PC-3 (cell line): ENCODE measurements at regions of chr5 and their contacts with region 1.

Region 1: GRCh38 chr5:107673368-107674136 is 2.8 kb upstream of the EFNA5 start:
- DNase-seq: peak; percentile 98
- ATAC-seq: peak; percentile 45
- H3K4me3 ChIP-seq: peak overlapping the region; percentile 83
- H3K27ac ChIP-seq: peak overlapping the region; percentile 69
- H3K4me1 ChIP-seq: peaks cover 24% of the 10 kb centered on the region
- H3K27me3 ChIP-seq: peaks cover 12% of the 10 kb centered on the region; the same call in 1 of the 2 replicates
- CTCF ChIP-seq: peak; percentile 99

Region 2: DNA sequence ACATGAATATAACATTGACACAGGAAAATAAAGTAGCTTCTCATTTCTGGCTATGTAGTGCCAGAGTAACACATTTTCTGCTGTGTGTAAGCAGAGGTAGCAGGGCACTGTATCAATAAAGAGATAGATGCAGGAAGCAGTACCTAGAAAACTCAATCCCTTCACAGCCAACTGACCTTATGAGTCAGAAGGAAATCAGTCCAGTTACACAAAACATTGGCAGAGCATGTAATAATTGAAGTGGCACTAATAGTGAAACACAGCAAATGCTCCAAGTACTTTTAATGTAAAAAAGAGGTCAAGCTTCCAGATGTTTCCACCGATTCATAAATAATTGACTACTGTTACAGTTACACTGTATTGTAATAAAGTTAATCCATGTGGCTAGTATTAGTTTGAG is 709.4 kb before region 1 on chr5:
- CTCF ChIA-PET with region 1: no interaction called
- POLR2A ChIA-PET with region 1: no interaction called
- intact Hi-C with region 1: loop called (anchors 10 kb)
- DNase-seq: peak; percentile 82
- ATAC-seq: peak; percentile 90
- H3K4me3 ChIP-seq: no peak overlapping the region
- H3K27ac ChIP-seq: no peak overlapping the region
- H3K4me1 ChIP-seq: peaks cover 44% of the 10 kb centered on the region
- H3K27me3 ChIP-seq: no peaks in the 10 kb centered on the region
- CTCF ChIP-seq: no peak

Region 3: GRCh38 chr5:107257885-107258520 is 415.5 kb before region 1 on chr5:
- CTCF ChIA-PET with region 1: no interaction called
- POLR2A ChIA-PET with region 1: no interaction called
- intact Hi-C with region 1: loop called (anchors 5 kb)
- DNase-seq: peak; percentile 83
- ATAC-seq: peak; percentile 96
- H3K4me3 ChIP-seq: peak overlapping the region; percentile 30; the same call in 1 of the 2 replicates
- H3K27ac ChIP-seq: peak overlapping the region; percentile 91
- H3K4me1 ChIP-seq: peaks cover 15% of the 10 kb centered on the region
- H3K27me3 ChIP-seq: no peaks in the 10 kb centered on the region
- CTCF ChIP-seq: peak; percentile 25; the same call in 1 of the 2 replicates

Region 4: DNA sequence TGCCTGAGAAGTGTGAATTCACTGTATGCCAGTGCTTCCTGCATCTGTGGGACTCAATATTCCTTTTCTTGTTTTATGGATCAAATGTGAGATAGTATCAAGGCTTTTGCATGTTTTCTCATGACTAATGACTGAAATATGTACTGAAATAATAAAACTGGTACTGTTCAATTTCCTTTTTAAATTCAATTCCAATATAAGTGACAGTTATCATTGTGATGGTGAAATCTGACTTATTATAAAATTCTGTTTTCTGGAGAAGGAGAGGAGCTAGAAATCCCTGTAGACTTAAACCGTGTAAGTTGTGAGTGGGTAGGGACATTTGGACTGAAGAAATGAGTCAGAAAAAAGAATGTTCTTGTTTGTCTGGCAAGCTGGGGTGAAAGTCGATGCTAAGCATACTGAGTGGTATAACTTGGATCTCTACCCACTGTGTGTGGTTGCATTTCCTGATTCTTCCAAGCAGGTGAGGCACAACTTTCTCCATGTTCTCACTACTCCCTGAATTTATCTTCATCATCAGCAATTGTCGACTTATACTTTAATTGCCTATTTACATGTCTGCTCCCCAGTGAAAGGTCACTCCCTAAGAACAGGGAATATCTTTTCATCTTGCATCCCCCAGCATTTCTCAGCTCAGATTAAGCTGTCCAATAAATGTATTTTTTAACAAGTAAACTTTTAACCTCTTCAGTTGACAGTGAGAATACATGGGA is 247.9 kb before region 1 on chr5:
- CTCF ChIA-PET with region 1: no interaction called
- POLR2A ChIA-PET with region 1: no interaction called
- intact Hi-C with region 1: loop called (anchors 1 kb)
- DNase-seq: peak; percentile 83
- ATAC-seq: peak; percentile 86
- H3K4me3 ChIP-seq: peak overlapping the region; percentile 38; the same call in 1 of the 2 replicates
- H3K27ac ChIP-seq: peak overlapping the region; percentile 89
- H3K4me1 ChIP-seq: peaks cover 40% of the 10 kb centered on the region
- H3K27me3 ChIP-seq: no peaks in the 10 kb centered on the region
- CTCF ChIP-seq: no peak

Region 5: GRCh38 chr5:107486489-107486888 is 187.1 kb before region 1 on chr5:
- CTCF ChIA-PET with region 1: no interaction called
- POLR2A ChIA-PET with region 1: no interaction called
- intact Hi-C with region 1: no loop called
- DNase-seq: peak; percentile 78
- ATAC-seq: peak; percentile 99
- H3K4me3 ChIP-seq: no peak overlapping the region
- H3K27ac ChIP-seq: peak overlapping the region; percentile 56
- H3K4me1 ChIP-seq: peaks cover 23% of the 10 kb centered on the region
- H3K27me3 ChIP-seq: no peaks in the 10 kb centered on the region
- CTCF ChIP-seq: no peak

Region 6: GRCh38 chr5:107557051-107557658 is 116.4 kb before region 1 on chr5:
- CTCF ChIA-PET with region 1: interaction called, 5 read pairs
- POLR2A ChIA-PET with region 1: interaction called, 17 read pairs
- intact Hi-C with region 1: no loop called
- DNase-seq: peak; percentile 86
- ATAC-seq: peak; percentile 80
- H3K4me3 ChIP-seq: peak overlapping the region; percentile 4; the same call in 1 of the 2 replicates
- H3K27ac ChIP-seq: peak overlapping the region; percentile 53
- H3K4me1 ChIP-seq: peaks cover 36% of the 10 kb centered on the region
- H3K27me3 ChIP-seq: no peaks in the 10 kb centered on the region
- CTCF ChIP-seq: no peak

Region 7: DNA sequence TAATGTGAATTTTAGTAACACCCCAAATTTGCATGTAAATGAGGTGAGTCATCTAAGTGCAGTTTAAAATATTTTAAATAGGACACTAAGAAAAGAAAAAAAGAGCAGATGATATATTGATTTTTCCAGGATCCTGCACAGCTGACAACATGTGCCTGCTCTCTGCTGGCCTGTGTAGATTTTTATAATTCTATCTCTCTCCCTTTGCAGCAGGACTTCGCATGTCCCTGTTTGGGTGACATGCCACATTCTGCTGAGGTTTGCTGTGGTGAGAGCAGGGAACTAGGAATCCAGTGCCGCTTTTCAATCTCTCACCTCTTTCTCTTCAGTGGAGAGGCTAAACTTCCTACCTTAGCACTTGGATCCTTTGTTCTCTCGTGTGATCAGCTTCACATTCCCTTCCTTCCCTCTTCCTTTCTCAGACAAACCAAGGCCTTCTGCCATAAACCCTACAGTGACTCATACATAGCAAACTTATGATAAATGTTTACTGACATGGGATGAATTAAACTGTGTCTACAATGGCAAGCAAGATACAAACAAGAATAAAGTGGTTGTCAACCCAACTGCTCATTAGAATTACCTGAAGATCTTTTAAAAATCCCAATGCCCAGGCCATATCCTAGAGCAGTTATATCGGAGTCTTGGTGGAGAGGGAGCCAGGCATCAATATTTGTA is 196.0 kb after region 1 on chr5:
- CTCF ChIA-PET with region 1: no interaction called
- POLR2A ChIA-PET with region 1: no interaction called
- intact Hi-C with region 1: loop called (anchors 1 kb)
- DNase-seq: peak; percentile 96
- ATAC-seq: peak; percentile 93
- H3K4me3 ChIP-seq: peak overlapping the region; percentile 7; the same call in 1 of the 2 replicates
- H3K27ac ChIP-seq: peak overlapping the region; percentile 81
- H3K4me1 ChIP-seq: peaks cover 30% of the 10 kb centered on the region
- H3K27me3 ChIP-seq: no peaks in the 10 kb centered on the region
- CTCF ChIP-seq: no peak

Region 8: GRCh38 chr5:109409844-109410388 is 1736.4 kb after region 1 on chr5 and contains the start of gene PJA2:
- CTCF ChIA-PET with region 1: no interaction called
- POLR2A ChIA-PET with region 1: interaction called, 6 read pairs
- intact Hi-C with region 1: loop called (anchors 10 kb)
- DNase-seq: peak; percentile 99
- ATAC-seq: peak; percentile 83
- H3K4me3 ChIP-seq: peak within 1 kb of the TSS; percentile 88
- H3K27ac ChIP-seq: peak within 1 kb of the TSS; percentile 61
- H3K4me1 ChIP-seq: peaks cover 28% of the 10 kb centered on the region
- H3K27me3 ChIP-seq: no peaks in the 10 kb centered on the region
- CTCF ChIP-seq: no peak
- total RNA-seq, gene PJA2: 12.8 and 14.3 TPM in 2 replicates